Endothelial cell of umbilical vein (primary cell): ENCODE measurements at regions of chr17 and their contacts with region 1.

Region 1: DNA sequence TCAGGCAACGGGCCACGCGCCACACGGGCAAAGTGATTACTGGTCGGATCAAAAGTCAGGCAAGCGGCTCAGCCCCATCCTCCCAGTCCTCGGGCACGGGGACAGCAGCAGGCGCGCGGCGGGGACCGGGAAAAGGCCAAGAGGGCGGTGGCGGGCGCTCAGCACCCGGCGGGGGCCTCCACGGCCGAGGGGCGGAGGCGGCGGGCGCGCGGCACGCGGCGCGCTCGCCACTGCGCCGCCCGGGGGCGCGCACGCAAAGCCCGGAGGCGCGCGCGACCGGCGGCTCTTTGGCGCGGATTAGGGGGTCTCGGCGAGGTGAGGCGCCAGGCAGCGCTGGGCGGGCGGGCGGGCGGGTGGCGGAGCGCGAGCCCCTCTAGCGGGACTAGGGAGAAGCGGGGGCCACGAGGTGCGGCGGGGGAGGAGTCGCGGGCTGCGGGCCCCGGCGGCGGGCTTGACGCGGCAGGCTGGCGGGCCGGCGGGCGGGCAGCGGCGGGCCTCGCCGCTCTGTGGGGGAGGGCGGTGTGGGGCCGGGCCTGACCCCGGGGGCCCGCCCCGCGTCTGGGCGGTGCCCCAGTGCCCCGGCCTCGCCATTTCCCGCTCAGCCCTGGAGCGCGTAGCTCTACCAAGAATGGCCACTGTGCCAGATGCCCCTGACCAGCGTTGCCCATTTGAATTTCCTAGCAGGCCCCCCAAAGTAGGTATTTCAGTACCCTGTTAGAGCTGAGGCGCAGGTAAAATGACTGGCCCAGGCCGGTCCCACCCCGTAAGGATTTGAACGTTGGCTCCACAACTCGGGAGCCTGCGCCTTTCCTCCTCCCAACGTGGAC is at the starts of genes ACACA and TADA2A:
- DNase-seq: peak; percentile 81
- H3K4me3 ChIP-seq: peak within 1 kb of the TSS; percentile 67 to 96 (median 86)
- H3K27ac ChIP-seq: peak within 1 kb of the TSS; percentile 84
- H3K4me1 ChIP-seq: peaks cover 12% of the 10 kb centered on the region
- H3K27me3 ChIP-seq: no peaks in the 10 kb centered on the region
- CTCF ChIP-seq: no peak
- POLR2A ChIP-seq: peak; percentile 95
- total RNA-seq, gene ACACA: 116 and 124 TPM in 2 replicates
- total RNA-seq, gene TADA2A: 20.5 and 22.4 TPM in 2 replicates

Region 2: DNA sequence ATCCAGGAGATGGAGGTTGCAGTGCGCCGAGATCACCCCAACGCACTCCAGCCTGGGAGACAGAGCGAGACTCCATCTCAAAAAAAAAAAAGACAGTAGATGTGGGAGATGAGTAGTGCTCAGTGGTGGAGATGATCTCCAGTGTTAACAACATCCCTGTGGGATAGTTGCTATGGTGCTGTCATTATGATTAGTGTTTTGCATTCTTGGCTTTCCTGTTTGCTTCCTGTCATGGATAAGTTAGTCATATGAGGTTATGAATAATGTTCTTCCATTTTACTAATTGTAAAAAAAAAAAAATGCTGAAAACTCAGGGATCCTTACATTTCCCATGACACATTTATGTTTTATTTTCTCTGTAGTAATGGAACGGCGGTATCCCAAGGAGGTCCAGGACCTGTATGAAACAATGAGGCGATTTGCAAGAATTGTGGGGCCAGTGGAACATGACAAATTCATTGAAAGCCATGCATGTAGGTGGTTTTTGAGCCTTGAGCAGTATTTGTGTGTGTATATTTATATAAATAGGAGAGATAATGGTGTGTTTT is 58.3 kb after region 1 on chr17:
- CTCF ChIA-PET with region 1: no interaction called
- POLR2A ChIA-PET with region 1: interaction called, 5 read pairs
- dilution Hi-C with region 1: no loop called
- intact Hi-C with region 1: loop called (anchors 2 kb)
- DNase-seq: peak; percentile 88
- H3K4me3 ChIP-seq: no peak overlapping the region
- H3K27ac ChIP-seq: peak overlapping the region; percentile 94
- H3K4me1 ChIP-seq: peaks cover 16% of the 10 kb centered on the region
- H3K27me3 ChIP-seq: no peaks in the 10 kb centered on the region
- CTCF ChIP-seq: no peak
- POLR2A ChIP-seq: no peak

Region 3: DNA sequence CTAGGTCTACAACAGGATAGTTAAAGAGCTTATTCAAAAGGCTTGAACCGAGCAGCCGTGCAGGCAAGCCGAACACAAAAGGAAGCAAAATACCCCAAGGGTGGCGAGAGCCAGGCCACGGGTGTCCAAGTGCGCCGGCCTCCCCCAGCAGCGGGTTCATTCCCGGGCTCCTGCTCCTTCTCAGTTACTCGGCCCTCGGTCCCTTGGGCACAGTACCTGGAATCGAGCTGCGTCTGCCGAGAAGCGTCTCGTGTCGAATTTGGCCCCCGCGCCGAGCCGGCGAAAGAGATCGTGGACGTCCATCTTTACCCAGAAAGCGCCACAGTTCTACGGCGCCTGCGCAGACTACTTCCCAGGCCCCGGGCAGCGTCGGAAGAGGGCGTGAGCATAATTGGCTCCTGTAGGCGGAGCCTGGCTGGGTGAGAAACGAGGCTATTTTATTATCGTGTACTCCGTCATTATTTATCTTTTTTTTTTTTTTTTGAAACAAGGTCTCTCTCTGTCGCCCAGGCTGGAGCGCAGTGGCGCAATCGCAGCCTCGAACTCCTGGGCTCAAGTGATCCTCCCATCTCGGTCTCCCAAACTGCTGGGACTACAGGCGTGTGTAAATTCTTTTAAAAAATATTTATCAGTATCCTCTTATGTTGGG is 236.4 kb after region 1 on chr17 and contains the start of gene DDX52:
- CTCF ChIA-PET with region 1: no interaction called
- POLR2A ChIA-PET with region 1: no interaction called
- dilution Hi-C with region 1: no loop called
- intact Hi-C with region 1: loop called (anchors 5 kb)
- DNase-seq: peak; percentile 95
- H3K4me3 ChIP-seq: peak within 1 kb of the TSS; percentile 38 to 77 (median 56)
- H3K27ac ChIP-seq: peak within 1 kb of the TSS; percentile 73
- H3K4me1 ChIP-seq: peaks cover 28% of the 10 kb centered on the region
- H3K27me3 ChIP-seq: no peaks in the 10 kb centered on the region
- CTCF ChIP-seq: no peak
- POLR2A ChIP-seq: peak; percentile 88
- total RNA-seq, gene DDX52: 48.4 and 58.4 TPM in 2 replicates